ENCODE measurements at regions of chr21 and their contacts with region 1.

Region 1: DNA sequence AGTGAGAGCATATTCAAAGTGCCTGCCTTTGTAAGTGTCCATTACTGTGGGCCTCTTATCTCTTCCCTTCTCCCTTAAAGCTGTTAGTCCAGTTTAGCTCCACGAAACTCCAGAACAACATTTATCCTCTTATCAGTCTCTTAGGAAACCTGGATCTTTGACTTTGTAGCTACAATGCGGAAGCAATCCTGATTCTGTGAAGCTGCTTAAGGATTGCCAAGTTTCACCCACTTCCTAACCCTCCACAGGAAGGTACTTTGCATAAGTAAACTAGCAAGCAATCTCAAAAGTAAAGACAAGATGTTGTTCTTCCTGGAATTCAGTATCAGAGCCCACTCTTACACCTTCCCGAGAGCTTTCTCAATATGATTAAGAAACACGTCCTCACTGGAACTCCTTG is 164.9 kb upstream of the USP25 start:
- DNase-seq: no peak
- H3K4me3 ChIP-seq: no peak overlapping the region
- H3K27ac ChIP-seq: no peak overlapping the region
- H3K4me1 ChIP-seq: peaks cover 0 to 4% (median 0%) of the 10 kb centered on the region in 4 experiments; a peak in 1 of 7 replicates
- H3K27me3 ChIP-seq: no peaks in the 10 kb centered on the region
- CTCF ChIP-seq: no peak
- EP300 ChIP-seq: no peak
- POLR2A ChIP-seq: no peak
- RAD21 ChIP-seq: no peak

Region 2: GRCh38 chr21:15552914-15553494 is 11.9 kb before region 1 on chr21:
- CTCF ChIA-PET with region 1: interaction called, 11 read pairs
- POLR2A ChIA-PET with region 1: no interaction called
- DNase-seq: no peak
- H3K4me3 ChIP-seq: no peak overlapping the region
- H3K27ac ChIP-seq: no peak overlapping the region
- H3K4me1 ChIP-seq: no peaks in the 10 kb centered on the region
- H3K27me3 ChIP-seq: peaks cover 0 to 1% (median 0%) of the 10 kb centered on the region in 4 experiments; a peak in 1 of 7 replicates
- CTCF ChIP-seq: peak in 1 of 3 experiments; percentile 51; a peak in 2 of 4 replicates
- EP300 ChIP-seq: no peak
- POLR2A ChIP-seq: no peak
- RAD21 ChIP-seq: peak; percentile 46 to 56

Measured in H1 (cell line).